ENCODE measurements at regions of chr3 and their contacts with region 1.

Region 1: GRCh38 chr3:16247276-16248061 is 17.3 kb downstream of the DPH3 start:
- DNase-seq: peak; percentile 77
- ATAC-seq: peak; percentile 82
- H3K4me3 ChIP-seq: peak overlapping the region; percentile 53 to 72 (median 55)
- H3K27ac ChIP-seq: no peak overlapping the region
- H3K4me1 ChIP-seq: peaks cover 35% of the 10 kb centered on the region
- H3K27me3 ChIP-seq: peaks cover 1 to 5% of the 10 kb centered on the region in 2 experiments; a peak in 2 of 5 replicates
- CTCF ChIP-seq: peak; percentile 94
- EP300 ChIP-seq: no peak
- POLR2A ChIP-seq: no peak
- RAD21 ChIP-seq: peak; percentile 87

Region 2: DNA sequence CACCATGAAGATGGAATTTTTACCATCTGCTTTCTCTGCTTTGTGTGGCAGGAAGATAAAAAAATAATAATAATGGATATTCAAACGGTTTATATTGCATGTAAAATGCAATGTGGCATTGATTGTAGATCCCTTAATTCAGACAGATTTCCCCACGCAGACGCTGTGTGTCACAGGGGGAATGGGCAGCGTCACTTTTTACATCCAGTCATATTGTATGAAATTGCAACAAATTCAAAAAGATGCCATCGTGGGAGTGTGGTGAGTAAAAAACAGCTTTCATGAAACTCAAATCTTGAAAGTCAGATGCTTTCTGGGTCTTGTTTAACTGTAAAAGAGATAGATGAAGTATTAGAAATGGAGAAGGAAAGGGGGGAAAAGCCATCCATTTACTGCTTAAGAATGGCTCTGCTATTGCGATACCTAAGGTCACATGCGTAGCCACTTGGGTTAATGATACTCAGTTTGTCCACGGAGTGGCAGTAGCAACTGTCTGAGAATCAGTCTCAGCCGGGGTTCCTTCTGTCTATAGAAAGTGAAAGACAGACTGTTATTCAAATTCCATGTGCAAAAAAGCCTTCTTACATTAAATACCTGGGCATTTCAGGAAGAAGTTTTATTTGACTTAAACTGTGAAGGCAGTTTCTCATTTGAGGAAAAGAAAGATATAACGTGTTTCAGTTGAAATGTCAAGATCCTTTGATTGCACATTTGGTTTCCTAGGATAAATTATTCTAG is 617.4 kb before region 1 on chr3:
- CTCF ChIA-PET with region 1: interaction called, 5 read pairs
- POLR2A ChIA-PET with region 1: no interaction called
- in situ Hi-C with region 1: loop called (anchors 25 kb)
- intact Hi-C with region 1: no loop called
- DNase-seq: peak; percentile 62
- ATAC-seq: peak; percentile 98
- H3K4me3 ChIP-seq: no peak overlapping the region
- H3K27ac ChIP-seq: no peak overlapping the region
- H3K4me1 ChIP-seq: peaks cover 13% of the 10 kb centered on the region
- H3K27me3 ChIP-seq: no peaks in the 10 kb centered on the region
- CTCF ChIP-seq: peak; percentile 77
- EP300 ChIP-seq: no peak
- POLR2A ChIP-seq: no peak
- RAD21 ChIP-seq: peak; percentile 55

Region 3: GRCh38 chr3:16048435-16049318 is 198.8 kb before region 1 on chr3:
- CTCF ChIA-PET with region 1: interaction called, 17 read pairs
- POLR2A ChIA-PET with region 1: interaction called, 3 read pairs
- in situ Hi-C with region 1: loop called (anchors 5 kb)
- intact Hi-C with region 1: loop called (anchors 1 kb)
- DNase-seq: peak; percentile 72
- ATAC-seq: peak; percentile 95
- H3K4me3 ChIP-seq: no peak overlapping the region; a peak in 1 of 6 replicates
- H3K27ac ChIP-seq: no peak overlapping the region
- H3K4me1 ChIP-seq: peaks cover 39% of the 10 kb centered on the region
- H3K27me3 ChIP-seq: no peaks in the 10 kb centered on the region; a peak in 1 of 5 replicates
- CTCF ChIP-seq: peak; percentile 89
- EP300 ChIP-seq: no peak
- POLR2A ChIP-seq: no peak
- RAD21 ChIP-seq: peak; percentile 92

Region 4: GRCh38 chr3:16177962-16178627 is 69.4 kb before region 1 on chr3:
- CTCF ChIA-PET with region 1: interaction called, 7 read pairs
- POLR2A ChIA-PET with region 1: no interaction called
- in situ Hi-C with region 1: no loop called
- intact Hi-C with region 1: loop called (anchors 1 kb)
- DNase-seq: peak; percentile 42
- ATAC-seq: peak; percentile 90
- H3K4me3 ChIP-seq: no peak overlapping the region
- H3K27ac ChIP-seq: no peak overlapping the region
- H3K4me1 ChIP-seq: peaks cover 19% of the 10 kb centered on the region
- H3K27me3 ChIP-seq: peaks cover 3 to 56% of the 10 kb centered on the region in 2 experiments; a peak in 3 of 5 replicates
- CTCF ChIP-seq: peak; percentile 98
- EP300 ChIP-seq: no peak
- POLR2A ChIP-seq: no peak
- RAD21 ChIP-seq: peak; percentile 96

Region 5: GRCh38 chr3:16433701-16434151 is 186.3 kb after region 1 on chr3:
- CTCF ChIA-PET with region 1: no interaction called
- POLR2A ChIA-PET with region 1: no interaction called
- in situ Hi-C with region 1: no loop called
- intact Hi-C with region 1: no loop called
- DNase-seq: no peak
- ATAC-seq: no peak
- H3K4me3 ChIP-seq: no peak overlapping the region
- H3K27ac ChIP-seq: no peak overlapping the region
- H3K4me1 ChIP-seq: no peaks in the 10 kb centered on the region
- H3K27me3 ChIP-seq: peaks cover 1 to 11% of the 10 kb centered on the region in 2 experiments; a peak in 3 of 5 replicates
- CTCF ChIP-seq: no peak
- EP300 ChIP-seq: no peak
- POLR2A ChIP-seq: no peak
- RAD21 ChIP-seq: no peak